ENCODE measurements at regions of chr11 and their contacts with region 1.

Region 1: DNA sequence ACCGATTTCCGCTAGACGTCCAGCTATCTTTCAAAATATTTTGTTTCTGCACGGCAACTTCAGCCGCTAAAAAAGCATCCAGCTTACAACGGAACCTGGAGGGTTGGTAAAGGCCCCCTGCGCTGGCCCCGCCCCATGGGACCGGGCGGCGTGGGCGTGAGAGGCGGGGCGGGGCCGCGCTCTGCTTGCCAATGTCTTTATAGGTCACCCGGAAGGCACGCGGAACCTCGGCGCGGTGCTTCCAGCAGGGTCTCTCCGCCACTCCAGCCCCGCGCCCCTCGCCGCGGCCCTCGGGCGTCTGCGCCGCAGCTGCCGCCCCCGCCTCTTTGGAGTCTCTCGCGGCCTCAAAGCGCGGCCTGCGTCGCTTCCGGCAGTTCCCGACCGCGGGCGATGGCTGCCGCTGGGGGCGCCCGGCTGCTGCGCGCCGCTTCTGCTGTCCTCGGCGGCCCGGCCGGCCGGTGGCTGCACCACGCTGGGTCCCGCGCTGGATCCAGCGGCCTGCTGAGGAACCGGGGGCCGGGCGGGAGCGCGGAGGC is at the start of gene FDX1:
- DNase-seq: peak; percentile 90
- H3K4me3 Mint-ChIP-seq: peak within 1 kb of the TSS; percentile 98
- H3K27ac Mint-ChIP-seq: peak within 1 kb of the TSS; percentile 93
- H3K4me1 Mint-ChIP-seq: peaks cover 38% of the 10 kb centered on the region
- H3K27me3 Mint-ChIP-seq: no peaks in the 10 kb centered on the region
- total RNA-seq, gene FDX1: 9.8 to 11.2 TPM

Region 2: DNA sequence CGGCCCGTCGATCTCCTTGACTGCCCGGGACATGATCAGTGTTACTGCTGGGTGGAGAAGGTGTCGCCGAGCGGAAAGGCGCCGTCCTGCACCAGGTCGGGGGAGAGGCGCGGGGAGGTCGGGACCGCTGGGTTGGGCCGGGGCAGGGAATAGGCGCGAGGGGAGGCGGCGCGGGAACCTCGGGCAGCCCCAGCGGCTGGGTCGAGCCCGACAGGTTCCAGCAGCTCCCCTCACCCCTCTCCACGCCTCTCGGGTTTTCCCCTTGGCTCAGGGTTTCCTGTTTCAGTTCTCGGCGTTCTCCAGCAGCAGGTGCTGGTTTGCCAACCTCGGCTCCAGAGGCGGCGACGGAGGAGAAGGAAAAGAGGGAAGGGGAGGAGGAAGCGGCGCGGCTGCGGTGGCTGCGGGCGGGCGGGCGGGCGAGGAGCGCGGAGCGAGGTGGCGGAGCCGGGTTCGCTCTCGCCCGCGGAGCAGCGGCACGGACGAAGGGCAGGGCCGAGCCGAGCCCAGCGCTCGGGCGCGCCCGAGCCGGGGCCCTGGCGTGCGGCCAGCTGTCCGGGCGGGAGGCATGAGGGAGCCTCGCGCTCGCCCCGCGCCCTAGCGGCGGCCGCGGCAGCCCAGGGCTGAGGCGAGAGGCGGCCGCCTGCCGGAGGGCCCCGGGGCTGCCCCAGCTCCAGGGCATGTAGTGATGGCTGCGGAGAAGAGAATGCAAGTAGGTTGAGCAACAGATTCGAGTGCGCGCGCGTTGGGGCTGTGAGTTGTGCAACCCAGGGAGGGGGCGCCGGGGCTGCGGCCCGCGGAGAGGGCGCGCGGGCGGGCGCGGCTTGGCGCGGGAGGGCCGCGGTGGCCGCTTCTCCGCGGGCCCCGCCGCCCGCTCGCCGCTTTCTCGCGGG is 337.0 kb before region 1 on chr11 and contains the start of gene ZC3H12C:
- CTCF ChIA-PET with region 1: no interaction called
- POLR2A ChIA-PET with region 1: no interaction called
- intact Hi-C with region 1: loop called (anchors 5 kb)
- DNase-seq: peak; percentile 63
- H3K4me3 Mint-ChIP-seq: peak within 1 kb of the TSS; percentile 74
- H3K27ac Mint-ChIP-seq: no peak within 1 kb of the TSS
- H3K4me1 Mint-ChIP-seq: peaks cover 9% of the 10 kb centered on the region
- H3K27me3 Mint-ChIP-seq: peaks cover 43% of the 10 kb centered on the region
- total RNA-seq, gene ZC3H12C: 0.46 to 0.69 TPM

Region 3: DNA sequence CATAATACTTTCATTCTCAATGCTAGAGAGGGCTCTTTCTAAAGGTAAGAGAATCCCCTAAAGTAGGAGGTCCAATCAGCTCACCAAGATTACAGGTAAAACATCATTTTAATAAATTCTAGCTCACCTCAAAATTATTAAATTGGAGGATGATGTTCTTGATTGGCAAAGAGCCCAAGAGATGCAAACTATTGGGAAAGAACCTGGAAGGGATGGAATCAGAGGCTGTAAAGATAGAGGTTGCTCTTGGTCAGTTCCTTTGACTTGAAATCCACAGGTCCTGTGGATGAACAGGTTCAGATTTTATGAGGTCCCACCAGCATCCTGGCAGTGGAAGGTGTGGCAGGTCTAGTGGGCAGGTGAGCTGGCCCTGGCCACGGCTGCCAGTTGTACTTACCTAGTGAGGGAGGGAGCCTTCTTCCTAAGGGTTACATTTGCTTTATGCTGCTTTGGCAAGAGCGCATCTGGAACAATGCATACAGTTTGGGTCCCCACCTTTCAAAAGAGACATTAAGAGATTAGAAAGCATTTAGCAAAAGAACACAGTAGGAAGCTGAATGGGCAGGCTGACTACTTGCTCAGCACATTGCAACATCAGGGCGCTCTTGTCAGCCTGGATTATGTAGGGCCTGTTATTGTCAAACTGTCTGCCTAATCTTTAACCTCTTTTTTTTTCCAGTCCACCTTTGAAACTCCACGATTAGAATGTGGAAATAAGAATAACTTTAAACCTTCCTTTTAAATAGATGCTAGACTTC is 230.4 kb before region 1 on chr11:
- CTCF ChIA-PET with region 1: interaction called, 66 read pairs
- POLR2A ChIA-PET with region 1: no interaction called
- intact Hi-C with region 1: loop called (anchors 1 kb)
- DNase-seq: no peak
- H3K4me3 Mint-ChIP-seq: no peak overlapping the region
- H3K27ac Mint-ChIP-seq: no peak overlapping the region
- H3K4me1 Mint-ChIP-seq: no peaks in the 10 kb centered on the region
- H3K27me3 Mint-ChIP-seq: peaks cover 3% of the 10 kb centered on the region

Region 4: DNA sequence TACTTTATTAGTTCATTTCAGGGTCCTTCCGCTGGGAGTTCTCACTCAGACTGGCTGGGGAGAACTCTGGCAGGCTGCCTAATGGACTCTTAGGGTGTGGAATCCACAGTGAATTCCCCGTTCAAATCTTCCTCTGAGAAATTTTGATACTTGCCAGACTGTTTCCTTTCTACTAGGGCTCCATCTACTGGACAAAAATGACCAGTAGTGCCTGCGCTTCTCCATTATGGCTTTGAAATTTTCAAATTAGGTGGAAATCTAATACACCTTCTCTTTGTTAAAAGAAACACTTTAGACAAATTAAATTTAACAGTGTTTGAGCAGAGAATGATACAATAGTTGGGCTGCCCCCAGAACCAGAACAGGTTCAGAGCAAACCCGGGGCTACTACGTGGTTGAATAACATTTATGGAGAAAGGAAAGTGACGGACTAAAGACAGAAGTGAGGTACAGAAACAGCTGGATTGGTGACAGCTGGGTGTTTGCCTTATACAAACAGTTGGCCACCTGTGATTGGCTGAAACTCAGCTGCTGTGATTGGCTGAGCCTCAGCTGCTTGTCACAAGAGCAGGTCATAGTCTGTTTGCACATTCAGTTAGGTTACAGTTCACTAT is 53.0 kb before region 1 on chr11:
- CTCF ChIA-PET with region 1: interaction called, 8 read pairs
- POLR2A ChIA-PET with region 1: no interaction called
- intact Hi-C with region 1: loop called (anchors 1 kb)
- DNase-seq: peak; percentile 32
- H3K4me3 Mint-ChIP-seq: no peak overlapping the region
- H3K27ac Mint-ChIP-seq: no peak overlapping the region
- H3K4me1 Mint-ChIP-seq: peaks cover 17% of the 10 kb centered on the region
- H3K27me3 Mint-ChIP-seq: peaks cover 5% of the 10 kb centered on the region

Region 5: GRCh38 chr11:110453684-110454354 is 24.0 kb after region 1 on chr11:
- CTCF ChIA-PET with region 1: interaction called, 9 read pairs
- POLR2A ChIA-PET with region 1: interaction called, 4 read pairs
- intact Hi-C with region 1: loop called (anchors 2 kb)
- DNase-seq: no peak
- H3K4me3 Mint-ChIP-seq: no peak overlapping the region
- H3K27ac Mint-ChIP-seq: no peak overlapping the region
- H3K4me1 Mint-ChIP-seq: peaks cover 34% of the 10 kb centered on the region
- H3K27me3 Mint-ChIP-seq: no peaks in the 10 kb centered on the region

Region 6: DNA sequence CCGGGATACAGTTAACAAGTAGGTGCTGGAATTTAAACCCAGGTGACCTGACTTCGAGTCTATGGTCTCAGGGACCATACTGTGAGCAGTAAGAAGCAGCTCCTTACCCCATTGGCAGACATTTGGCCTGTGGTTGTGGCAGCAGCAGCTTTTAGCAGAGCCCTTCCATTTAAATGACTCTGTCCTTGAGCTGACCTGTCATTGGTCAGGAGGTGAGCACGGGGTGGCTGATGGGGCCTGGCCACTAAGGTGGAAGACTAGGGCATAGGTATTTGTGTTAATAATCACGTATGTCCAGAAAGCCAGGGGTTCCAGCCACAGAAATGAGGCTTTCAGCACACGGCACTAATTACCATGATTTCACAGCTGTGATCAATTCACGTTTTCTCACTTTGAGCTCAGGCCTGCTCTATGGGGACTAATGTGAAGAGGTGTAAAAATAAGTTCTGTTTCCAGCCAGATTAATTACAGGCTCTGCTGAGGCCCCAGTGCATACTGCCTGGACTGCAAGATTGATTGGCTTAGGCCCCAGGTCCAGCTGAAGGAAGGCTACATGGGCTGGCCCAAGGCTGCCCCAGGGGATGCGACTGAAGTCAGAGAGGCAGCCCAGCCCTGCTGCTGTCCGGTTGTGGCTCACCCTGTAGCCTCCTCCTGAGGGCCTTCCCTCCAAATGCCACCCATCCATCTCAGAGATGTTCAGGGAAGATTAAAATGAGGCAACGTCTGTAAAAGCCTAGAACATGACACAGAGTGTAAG is 75.9 kb after region 1 on chr11:
- CTCF ChIA-PET with region 1: no interaction called
- POLR2A ChIA-PET with region 1: no interaction called
- intact Hi-C with region 1: no loop called
- DNase-seq: no peak
- H3K4me3 Mint-ChIP-seq: no peak overlapping the region
- H3K27ac Mint-ChIP-seq: no peak overlapping the region
- H3K4me1 Mint-ChIP-seq: no peaks in the 10 kb centered on the region
- H3K27me3 Mint-ChIP-seq: no peaks in the 10 kb centered on the region

Region 7: DNA sequence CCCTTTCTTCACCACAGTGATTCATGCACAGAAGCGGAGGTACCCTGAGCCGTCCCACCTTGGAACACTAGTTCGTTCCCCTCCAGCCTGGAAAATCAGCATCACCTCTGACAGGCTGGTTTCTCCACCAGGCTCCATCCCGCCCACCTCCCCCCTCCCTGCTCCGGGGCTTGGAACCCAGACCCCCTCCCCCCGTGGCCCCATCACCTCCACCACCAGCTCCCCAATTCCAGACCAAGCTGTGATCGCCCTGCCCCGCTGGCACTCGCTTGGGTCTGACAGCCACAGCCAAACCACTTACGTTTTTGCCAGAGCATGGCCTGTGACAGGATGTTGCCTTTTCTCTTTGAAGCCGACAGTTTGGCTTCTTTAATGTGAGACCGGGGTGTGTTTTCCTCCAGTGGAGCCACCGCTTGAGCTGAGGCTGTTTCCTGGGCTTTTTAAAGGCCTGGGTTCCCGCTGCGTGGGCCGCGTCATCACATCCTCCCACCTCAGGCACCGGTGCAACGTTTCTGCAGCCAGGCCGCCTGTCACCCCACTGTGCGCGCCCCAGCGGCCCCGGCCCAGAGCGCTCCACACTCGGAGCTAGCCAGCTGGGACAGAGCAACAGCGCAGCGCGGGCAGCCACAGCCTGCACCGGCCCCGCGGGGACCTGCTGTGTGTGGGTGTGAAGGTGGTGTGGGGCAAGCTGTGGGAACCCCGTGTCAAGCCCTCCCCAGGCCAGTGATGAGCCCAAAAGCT is 949.2 kb after region 1 on chr11 and contains the start of gene POU2AF1:
- CTCF ChIA-PET with region 1: no interaction called
- POLR2A ChIA-PET with region 1: no interaction called
- intact Hi-C with region 1: loop called (anchors 2 kb)
- DNase-seq: peak; percentile 88
- H3K4me3 Mint-ChIP-seq: peak within 1 kb of the TSS; percentile 62
- H3K27ac Mint-ChIP-seq: peak within 1 kb of the TSS; percentile 86
- H3K4me1 Mint-ChIP-seq: peaks cover 51% of the 10 kb centered on the region
- H3K27me3 Mint-ChIP-seq: no peaks in the 10 kb centered on the region
- total RNA-seq, gene POU2AF1: 26.9 to 28.3 TPM